Right ventricle myocardium inferior (tissue), 1 donor: ENCODE measurements at regions of chr12 and their contacts with region 1.

Region 1: GRCh38 chr12:95126076-95126475 is 52.7 kb upstream of the NR2C1 start:
- DNase-seq: no peak
- ATAC-seq: no peak

Region 2: DNA sequence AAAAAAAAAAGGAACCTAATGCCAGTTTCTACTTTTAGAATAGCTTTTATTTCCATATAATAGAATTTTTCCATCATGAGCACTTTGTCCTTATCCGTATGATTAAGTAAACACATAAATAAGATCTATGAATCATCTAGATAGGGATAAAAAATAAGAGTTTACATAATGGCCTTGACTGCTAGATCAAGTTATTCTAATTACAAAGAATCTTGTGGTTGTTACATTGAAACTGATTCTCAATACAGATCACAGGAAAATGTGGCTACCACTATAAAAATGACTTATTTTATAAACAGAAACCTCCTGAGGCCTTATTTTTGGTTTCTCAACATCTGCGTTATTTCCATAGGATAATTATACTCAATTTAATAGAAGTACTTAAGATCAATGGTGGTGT is 88.2 kb before region 1 on chr12:
- intact Hi-C with region 1: no loop called
- DNase-seq: no peak
- ATAC-seq: no peak

Region 3: DNA sequence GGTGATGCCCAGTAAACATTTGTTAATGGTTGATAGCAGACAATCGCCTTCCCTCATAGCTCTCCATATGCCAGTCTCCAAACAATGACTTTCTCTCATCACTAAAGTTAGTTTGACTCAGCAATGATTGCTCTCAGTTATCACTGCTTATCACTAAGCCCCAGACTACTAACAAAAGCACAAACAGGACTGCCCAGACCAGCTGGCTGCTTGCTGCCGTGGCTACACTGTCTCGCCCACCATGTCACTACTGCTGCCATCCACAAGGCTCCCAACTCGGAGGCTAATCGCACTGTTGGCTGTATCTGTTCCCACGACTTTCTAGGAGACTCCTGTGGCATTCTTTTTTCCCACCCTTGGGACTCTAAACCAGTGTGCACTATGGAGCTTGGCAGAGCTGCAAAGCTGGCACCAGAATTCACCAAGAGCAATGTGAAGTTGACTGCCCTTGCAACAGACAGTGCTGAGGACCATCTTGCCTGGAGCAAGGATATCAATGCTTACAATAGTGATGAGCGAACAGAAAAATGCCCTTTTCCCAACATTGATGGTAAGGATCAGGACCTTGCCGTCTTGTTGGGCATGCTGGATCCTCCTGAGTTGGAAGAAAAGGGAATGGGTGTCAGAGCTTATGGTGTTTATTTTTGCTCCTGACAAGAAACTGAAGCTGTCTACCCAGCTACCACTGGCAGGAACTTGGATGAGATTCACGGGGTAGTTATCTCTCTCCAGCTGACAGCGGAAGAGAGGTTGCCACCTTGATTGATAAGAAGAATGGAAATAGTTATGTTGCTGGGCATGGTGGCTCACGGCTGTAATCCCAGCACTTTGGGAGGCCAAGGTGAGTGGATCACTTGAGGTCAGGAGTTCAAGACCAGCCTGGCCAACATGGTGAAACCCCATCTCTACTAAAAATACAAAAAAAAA is 25.5 kb before region 1 on chr12:
- intact Hi-C with region 1: loop called (anchors 2 kb)
- DNase-seq: no peak
- ATAC-seq: peak; percentile 72